Caco-2 (cell line): ENCODE measurements at regions of chr11 and their contacts with region 1.

Region 1: DNA sequence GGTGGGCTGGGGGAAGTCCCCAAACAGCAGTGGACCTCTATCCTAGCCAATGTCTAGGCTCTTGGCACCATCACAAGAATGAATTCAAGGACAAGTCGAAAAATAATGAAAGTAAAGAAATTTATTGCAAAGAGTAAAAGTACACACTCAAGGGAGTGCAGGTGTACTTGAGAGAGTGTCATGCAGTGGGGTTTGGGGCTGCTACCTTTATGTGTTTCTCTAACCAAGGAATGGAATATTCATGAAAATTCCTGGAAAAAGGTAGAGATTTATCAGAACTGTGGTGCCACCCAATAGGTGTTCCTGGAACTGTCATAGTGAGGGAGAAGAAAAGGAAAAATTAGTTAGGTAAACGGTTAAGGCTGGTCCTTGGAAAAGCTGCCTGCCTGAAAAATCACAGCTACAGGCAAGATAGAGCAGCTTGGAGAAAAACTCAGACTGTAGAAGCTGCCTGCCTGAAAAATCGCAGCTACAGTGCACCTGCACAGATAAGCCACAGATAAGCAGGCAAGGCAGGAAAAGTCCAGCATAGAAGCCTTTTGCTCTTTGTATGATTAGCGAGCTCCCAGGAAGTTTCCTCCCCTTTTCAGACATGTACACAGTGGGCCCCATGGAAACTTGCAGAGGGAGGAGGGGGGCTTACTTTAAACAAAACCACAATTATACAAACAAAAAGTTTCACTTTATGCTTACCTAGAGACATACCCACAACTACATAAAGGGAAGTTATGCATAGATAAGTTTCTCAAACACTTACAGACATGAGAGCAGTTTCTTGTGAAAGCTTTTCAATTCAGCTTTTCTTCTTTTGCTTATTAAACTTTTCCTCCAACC is 71.4 kb upstream of the B3GNT6 start:
- DNase-seq: peak; percentile 89 to 92
- H3K4me3 ChIP-seq: no peak overlapping the region
- H3K4me3 Mint-ChIP-seq: peak overlapping the region; percentile 53
- H3K27ac Mint-ChIP-seq: peak overlapping the region; percentile 92
- H3K4me1 ChIP-seq: peaks cover 22% of the 10 kb centered on the region
- H3K4me1 Mint-ChIP-seq: peaks cover 30% of the 10 kb centered on the region
- H3K27me3 ChIP-seq: no peaks in the 10 kb centered on the region
- H3K27me3 Mint-ChIP-seq: no peaks in the 10 kb centered on the region
- CTCF ChIP-seq: no peak

Region 2: DNA sequence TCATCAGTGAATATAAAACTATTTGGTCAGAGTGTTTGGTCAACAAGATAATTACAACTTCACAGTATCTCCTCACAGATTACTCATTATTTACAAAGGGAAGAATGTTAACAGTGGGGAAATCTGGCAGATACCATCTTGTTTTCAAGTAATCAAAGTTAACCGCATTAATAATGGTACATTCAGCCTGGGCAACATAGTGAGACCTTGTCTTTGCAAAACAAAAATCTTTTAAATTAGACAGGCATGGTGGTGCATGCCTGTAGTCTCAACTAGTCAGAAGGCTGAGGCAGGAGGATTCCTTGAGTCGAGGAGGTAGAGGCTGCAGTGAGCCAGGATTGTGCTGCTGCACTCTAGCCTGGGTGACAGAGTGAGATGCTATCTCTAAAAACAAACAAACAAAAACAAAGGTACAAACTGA is 23.6 kb before region 1 on chr11:
- CTCF ChIA-PET with region 1: no interaction called
- POLR2A ChIA-PET with region 1: no interaction called
- intact Hi-C with region 1: loop called (anchors 2 kb)
- DNase-seq: no peak
- H3K4me3 ChIP-seq: no peak overlapping the region
- H3K4me3 Mint-ChIP-seq: no peak overlapping the region
- H3K27ac Mint-ChIP-seq: no peak overlapping the region
- H3K4me1 ChIP-seq: peaks cover 9% of the 10 kb centered on the region
- H3K4me1 Mint-ChIP-seq: peaks cover 30% of the 10 kb centered on the region
- H3K27me3 ChIP-seq: no peaks in the 10 kb centered on the region
- H3K27me3 Mint-ChIP-seq: no peaks in the 10 kb centered on the region
- CTCF ChIP-seq: no peak

Region 3: DNA sequence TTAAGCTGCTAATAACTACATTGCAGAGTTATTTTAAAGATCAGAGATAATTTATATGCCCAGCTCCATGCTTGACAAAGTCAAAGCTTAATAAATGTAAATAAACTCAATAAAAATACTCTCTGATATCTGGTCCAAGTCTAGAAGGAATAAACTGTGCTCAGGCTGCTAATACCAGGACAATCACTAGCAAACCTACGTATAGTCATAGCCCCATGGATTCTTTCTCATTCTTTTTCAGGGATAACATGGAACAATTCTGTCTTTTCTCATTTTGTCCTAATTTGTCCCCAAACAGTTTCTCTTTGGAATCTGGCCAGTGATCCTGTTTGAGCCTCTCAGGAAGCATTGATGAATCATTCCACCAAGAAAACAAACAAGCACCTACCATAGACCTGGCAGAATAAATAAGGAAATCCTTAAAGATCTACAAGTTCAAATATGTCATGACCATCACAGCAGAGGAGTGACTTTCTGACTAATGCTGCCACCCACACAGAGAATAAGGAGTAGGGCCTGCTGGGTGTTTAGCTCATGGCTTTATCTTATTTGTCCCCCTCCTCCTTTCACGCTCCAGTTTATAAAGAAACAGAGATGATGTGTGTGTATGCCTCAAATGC is 57.3 kb after region 1 on chr11:
- CTCF ChIA-PET with region 1: no interaction called
- POLR2A ChIA-PET with region 1: no interaction called
- intact Hi-C with region 1: no loop called
- DNase-seq: no peak
- H3K4me3 ChIP-seq: no peak overlapping the region
- H3K4me3 Mint-ChIP-seq: no peak overlapping the region
- H3K27ac Mint-ChIP-seq: no peak overlapping the region
- H3K4me1 ChIP-seq: peaks cover 9% of the 10 kb centered on the region; the same call in 1 of the 2 replicates
- H3K4me1 Mint-ChIP-seq: peaks cover 23% of the 10 kb centered on the region
- H3K27me3 ChIP-seq: no peaks in the 10 kb centered on the region
- H3K27me3 Mint-ChIP-seq: no peaks in the 10 kb centered on the region
- CTCF ChIP-seq: no peak

Region 4: DNA sequence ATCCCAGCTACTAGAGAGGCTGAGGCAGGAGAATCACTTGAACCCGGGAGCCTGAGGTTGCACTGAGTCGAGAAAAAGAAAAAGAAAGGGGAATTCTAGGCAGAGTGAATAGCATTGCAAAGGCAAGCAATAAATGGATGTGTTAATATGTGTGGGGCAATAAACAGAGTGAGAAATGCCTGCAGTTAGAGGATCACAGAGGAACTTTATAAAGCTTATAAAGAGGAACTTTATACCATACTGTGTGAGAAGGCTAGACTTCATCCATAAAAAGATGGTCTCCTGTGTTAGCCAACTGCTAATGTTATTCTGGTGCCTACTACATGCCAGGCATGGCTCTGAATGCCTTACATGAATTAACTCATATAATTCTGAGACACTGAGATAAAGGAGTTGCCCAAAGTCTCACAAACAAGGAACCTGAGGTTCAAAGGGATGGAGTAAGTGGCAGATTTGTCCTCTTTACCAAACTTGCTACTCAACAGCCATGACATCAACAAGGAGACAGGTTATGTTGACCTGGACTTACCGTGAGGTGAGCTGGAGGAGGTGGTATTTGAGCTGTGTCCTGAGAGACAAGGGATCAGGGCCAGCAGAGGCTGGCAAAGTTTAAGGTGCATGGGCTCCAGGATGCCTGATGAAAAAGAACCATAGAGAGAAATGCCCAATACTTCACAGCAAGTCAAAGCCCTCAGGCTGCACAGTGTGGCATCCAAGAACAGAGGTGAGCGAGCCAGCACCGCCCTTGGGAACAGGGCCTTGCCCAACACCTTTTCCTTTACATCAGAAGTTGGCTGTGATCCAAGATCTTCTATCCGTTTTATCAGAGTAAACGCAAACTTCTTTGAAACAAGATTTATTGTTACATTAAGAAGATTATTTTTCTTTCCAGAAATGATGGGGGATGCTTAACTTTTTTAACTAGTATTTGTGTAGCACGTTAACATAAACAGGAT is 72.5 kb after region 1 on chr11:
- CTCF ChIA-PET with region 1: interaction called, 12 read pairs
- POLR2A ChIA-PET with region 1: interaction called, 4 read pairs
- intact Hi-C with region 1: loop called (anchors 1 kb)
- DNase-seq: peak in 1 of 2 experiments; percentile 46
- H3K4me3 ChIP-seq: no peak overlapping the region
- H3K4me3 Mint-ChIP-seq: peak overlapping the region; percentile 31
- H3K27ac Mint-ChIP-seq: no peak overlapping the region
- H3K4me1 ChIP-seq: peaks cover 28% of the 10 kb centered on the region
- H3K4me1 Mint-ChIP-seq: peaks cover 36% of the 10 kb centered on the region
- H3K27me3 ChIP-seq: no peaks in the 10 kb centered on the region
- H3K27me3 Mint-ChIP-seq: no peaks in the 10 kb centered on the region
- CTCF ChIP-seq: no peak

Region 5: DNA sequence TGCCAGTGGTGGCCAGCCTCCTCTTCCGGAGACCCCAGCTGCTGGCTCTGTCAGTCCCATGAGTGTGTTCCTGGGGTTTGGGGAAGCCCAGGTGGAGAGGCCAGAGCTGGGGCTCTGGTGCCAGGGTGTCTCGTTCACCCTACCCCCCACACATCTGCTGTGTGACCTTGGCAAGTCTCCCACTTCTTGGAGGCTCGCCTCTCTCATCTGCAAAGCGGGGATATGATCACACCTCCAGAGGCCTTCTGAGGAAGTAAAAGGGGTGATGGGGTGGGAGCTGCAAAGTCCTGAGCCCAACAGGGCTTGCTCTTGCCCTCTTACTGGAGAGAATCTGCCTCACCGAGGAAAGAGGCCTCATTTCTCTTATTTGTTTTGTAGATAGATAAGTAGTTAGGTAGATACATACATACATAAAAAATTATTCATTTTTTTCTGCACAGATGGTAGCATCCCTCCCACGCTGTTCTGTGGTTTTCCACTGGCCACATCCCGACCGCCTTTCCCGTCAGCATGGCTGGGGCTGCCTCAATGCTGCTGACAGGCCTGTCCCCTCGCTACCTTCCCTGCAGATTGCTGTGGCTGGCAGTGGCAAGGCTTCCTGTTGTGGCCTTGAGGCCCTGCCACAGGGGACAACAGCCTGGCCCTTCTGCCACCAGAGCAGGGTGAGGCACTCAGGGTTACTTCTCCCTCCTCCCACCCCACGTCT is 189.2 kb after region 1 on chr11:
- CTCF ChIA-PET with region 1: no interaction called
- POLR2A ChIA-PET with region 1: no interaction called
- intact Hi-C with region 1: no loop called
- DNase-seq: no peak
- H3K4me3 ChIP-seq: no peak overlapping the region
- H3K4me3 Mint-ChIP-seq: no peak overlapping the region
- H3K27ac Mint-ChIP-seq: no peak overlapping the region
- H3K4me1 ChIP-seq: peaks cover 11% of the 10 kb centered on the region; the same call in 1 of the 2 replicates
- H3K4me1 Mint-ChIP-seq: peaks cover 14% of the 10 kb centered on the region
- H3K27me3 ChIP-seq: no peaks in the 10 kb centered on the region
- H3K27me3 Mint-ChIP-seq: no peaks in the 10 kb centered on the region
- CTCF ChIP-seq: no peak